ENCODE measurements at regions of chr3 and their contacts with region 1.

Region 1: DNA sequence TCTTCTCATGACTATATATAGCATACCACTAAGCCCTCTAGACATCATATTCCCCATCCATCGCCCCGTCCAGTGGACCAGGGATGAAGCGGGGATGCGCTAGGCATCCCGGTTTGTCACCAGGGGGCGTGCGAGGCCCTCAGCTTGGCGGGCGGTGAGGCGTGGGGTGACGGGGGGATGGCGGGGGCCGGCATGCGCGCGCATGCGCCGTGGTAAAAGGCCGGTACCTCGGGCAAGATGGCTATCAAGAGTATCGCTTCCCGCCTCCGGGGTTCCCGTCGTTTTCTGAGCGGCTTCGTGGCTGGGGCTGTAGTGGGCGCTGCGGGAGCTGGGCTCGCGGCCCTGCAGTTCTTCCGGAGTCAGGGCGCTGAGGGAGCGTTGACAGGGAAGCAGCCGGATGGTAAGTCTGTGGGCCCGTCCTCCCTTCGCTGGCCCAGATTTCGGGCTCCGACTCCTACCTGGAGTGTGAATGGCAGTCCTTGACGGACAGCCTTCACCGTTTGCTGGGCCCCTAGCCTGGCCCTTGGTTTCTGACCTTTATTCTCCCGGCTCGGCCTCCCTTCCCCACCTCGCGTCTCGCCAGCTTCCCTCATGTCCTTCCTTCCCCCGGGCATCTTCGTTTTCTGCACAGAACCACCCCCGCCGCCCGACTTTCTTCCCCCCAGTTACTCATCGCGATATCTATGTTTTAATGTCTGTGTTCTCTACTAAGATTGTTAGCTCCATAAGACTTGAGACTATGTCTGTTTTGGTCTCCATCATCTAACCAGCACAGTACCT is at the start of gene EXOG:
- DNase-seq: peak; percentile 86 to 93 (median 88)
- H3K4me3 ChIP-seq: peak within 1 kb of the TSS; percentile 58 to 87
- H3K4me3 Mint-ChIP-seq: peak within 1 kb of the TSS; percentile 89 to 99 (median 94)
- H3K27ac ChIP-seq: peak within 1 kb of the TSS; percentile 69
- H3K27ac Mint-ChIP-seq: peak within 1 kb of the TSS; percentile 77 to 93 (median 91)
- H3K4me1 ChIP-seq: peaks cover 15% of the 10 kb centered on the region
- H3K4me1 Mint-ChIP-seq: peaks cover 13 to 29% (median 16%) of the 10 kb centered on the region in 4 donors
- H3K27me3 ChIP-seq: no peaks in the 10 kb centered on the region
- H3K27me3 Mint-ChIP-seq: no peaks in the 10 kb centered on the region
- total RNA-seq, gene EXOG: 29.3 to 33.3 TPM

Region 2: DNA sequence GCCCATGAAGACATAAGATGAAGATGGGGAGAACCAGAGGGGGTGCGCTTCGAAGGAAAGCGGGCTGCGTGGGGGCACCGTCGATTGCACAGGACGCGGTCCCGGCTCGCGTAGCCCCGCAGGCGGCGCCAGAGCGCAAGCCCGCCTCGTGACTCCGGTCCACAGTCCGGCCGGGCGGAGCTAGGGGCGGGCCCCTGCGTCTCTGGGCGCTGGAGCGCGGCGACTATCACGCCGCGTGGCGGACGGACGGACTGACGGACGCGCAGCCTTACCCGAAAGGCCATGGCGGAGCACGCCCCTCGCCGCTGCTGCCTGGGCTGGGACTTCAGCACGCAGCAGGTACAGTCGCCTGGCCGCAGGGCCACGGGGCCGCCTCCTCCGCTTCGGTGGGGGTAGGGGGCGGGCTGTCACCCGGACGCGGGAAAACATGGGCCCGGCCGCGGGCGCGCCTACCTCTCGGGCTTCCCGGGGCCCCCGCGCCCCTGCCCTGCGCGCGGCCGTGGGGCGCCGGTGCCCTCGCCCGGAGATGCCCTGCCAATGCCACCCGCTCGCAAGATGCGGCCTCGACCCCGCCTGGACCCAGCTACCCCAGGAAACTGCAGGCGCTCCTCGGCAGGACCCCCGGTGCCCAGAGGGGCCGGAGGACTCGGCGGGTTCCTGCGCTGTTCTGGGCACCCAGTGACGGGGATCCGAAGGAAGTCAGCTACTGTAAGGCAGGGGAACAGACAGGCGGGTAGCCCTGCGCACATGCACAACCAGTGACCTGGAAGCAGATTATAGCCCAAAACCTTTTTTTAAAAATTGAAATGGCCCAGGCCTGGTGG is 149.5 kb before region 1 on chr3 and contains the start of gene XYLB:
- CTCF ChIA-PET with region 1: interaction called, 16 read pairs
- POLR2A ChIA-PET with region 1: no interaction called
- intact Hi-C with region 1: loop called (anchors 5 kb)
- DNase-seq: peak; percentile 54 to 75 (median 72)
- H3K4me3 ChIP-seq: peak within 1 kb of the TSS; percentile 11 to 57
- H3K4me3 Mint-ChIP-seq: peak within 1 kb of the TSS; percentile 80 to 89 (median 82)
- H3K27ac ChIP-seq: peak within 1 kb of the TSS; percentile 28
- H3K27ac Mint-ChIP-seq: peak within 1 kb of the TSS in 2 of 7 donors; percentile 31 to 62
- H3K4me1 ChIP-seq: peaks cover 17% of the 10 kb centered on the region
- H3K4me1 Mint-ChIP-seq: peaks cover 0 to 4% (median 3%) of the 10 kb centered on the region in 4 donors
- H3K27me3 ChIP-seq: no peaks in the 10 kb centered on the region
- H3K27me3 Mint-ChIP-seq: no peaks in the 10 kb centered on the region
- total RNA-seq, gene XYLB: 0.47 to 0.61 TPM

Region 3: GRCh38 chr3:38507120-38507519 is 10.8 kb after region 1 on chr3:
- CTCF ChIA-PET with region 1: interaction called, 16 read pairs
- POLR2A ChIA-PET with region 1: interaction called, 7 read pairs
- intact Hi-C with region 1: no loop called
- DNase-seq: no peak
- H3K4me3 ChIP-seq: no peak overlapping the region
- H3K4me3 Mint-ChIP-seq: no peak overlapping the region
- H3K27ac ChIP-seq: no peak overlapping the region
- H3K27ac Mint-ChIP-seq: peak overlapping the region in 3 of 7 donors; percentile 0 to 31 (median 14)
- H3K4me1 ChIP-seq: no peaks in the 10 kb centered on the region
- H3K4me1 Mint-ChIP-seq: no peaks in the 10 kb centered on the region
- H3K27me3 ChIP-seq: no peaks in the 10 kb centered on the region
- H3K27me3 Mint-ChIP-seq: no peaks in the 10 kb centered on the region

Region 4: GRCh38 chr3:38651154-38651789 is 155.0 kb after region 1 on chr3:
- CTCF ChIA-PET with region 1: interaction called, 155 read pairs
- POLR2A ChIA-PET with region 1: interaction called, 7 read pairs
- intact Hi-C with region 1: loop called (anchors 1 kb)
- DNase-seq: peak in 4 of 5 donors; percentile 64 to 72 (median 70)
- H3K4me3 ChIP-seq: no peak overlapping the region
- H3K4me3 Mint-ChIP-seq: peak overlapping the region in 4 of 8 donors; percentile 7 to 73 (median 53)
- H3K27ac ChIP-seq: no peak overlapping the region
- H3K27ac Mint-ChIP-seq: peak overlapping the region in 2 of 7 donors; percentile 49 to 76
- H3K4me1 ChIP-seq: peaks cover 22% of the 10 kb centered on the region
- H3K4me1 Mint-ChIP-seq: peaks cover 6 to 10% (median 8%) of the 10 kb centered on the region in 4 donors
- H3K27me3 ChIP-seq: peaks cover 10% of the 10 kb centered on the region
- H3K27me3 Mint-ChIP-seq: peaks cover 8 to 26% of the 10 kb centered on the region in 2 donors

Region 5: DNA sequence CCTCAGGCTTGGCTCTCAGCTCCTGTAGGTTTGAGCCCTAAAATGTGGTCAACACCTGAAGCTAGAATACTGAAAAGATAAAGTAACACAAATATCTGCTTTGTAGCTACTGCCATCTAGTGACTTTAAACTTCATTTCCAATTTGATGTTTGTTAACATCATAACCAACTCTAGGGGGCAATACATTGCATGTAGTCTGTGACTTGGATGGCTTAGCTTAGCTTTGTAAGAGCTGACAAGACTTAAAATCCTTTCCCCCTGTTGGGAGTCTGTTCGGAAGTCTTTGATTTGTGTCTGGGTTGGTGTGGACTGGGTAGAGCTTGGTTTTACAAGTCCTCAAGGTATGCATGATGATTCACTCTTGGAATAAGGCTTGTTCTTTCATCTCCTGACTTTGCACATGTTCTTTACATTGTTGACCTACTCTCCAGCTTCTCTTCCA is 503.7 kb after region 1 on chr3:
- CTCF ChIA-PET with region 1: interaction called, 13 read pairs
- POLR2A ChIA-PET with region 1: interaction called, 3 read pairs
- intact Hi-C with region 1: no loop called
- DNase-seq: peak in 4 of 5 donors; percentile 26 to 34 (median 28)
- H3K4me3 ChIP-seq: no peak overlapping the region
- H3K4me3 Mint-ChIP-seq: no peak overlapping the region
- H3K27ac ChIP-seq: no peak overlapping the region
- H3K27ac Mint-ChIP-seq: no peak overlapping the region
- H3K4me1 ChIP-seq: no peaks in the 10 kb centered on the region
- H3K4me1 Mint-ChIP-seq: no peaks in the 10 kb centered on the region
- H3K27me3 ChIP-seq: no peaks in the 10 kb centered on the region
- H3K27me3 Mint-ChIP-seq: peaks cover 5 to 10% of the 10 kb centered on the region in 2 donors

Region 6: DNA sequence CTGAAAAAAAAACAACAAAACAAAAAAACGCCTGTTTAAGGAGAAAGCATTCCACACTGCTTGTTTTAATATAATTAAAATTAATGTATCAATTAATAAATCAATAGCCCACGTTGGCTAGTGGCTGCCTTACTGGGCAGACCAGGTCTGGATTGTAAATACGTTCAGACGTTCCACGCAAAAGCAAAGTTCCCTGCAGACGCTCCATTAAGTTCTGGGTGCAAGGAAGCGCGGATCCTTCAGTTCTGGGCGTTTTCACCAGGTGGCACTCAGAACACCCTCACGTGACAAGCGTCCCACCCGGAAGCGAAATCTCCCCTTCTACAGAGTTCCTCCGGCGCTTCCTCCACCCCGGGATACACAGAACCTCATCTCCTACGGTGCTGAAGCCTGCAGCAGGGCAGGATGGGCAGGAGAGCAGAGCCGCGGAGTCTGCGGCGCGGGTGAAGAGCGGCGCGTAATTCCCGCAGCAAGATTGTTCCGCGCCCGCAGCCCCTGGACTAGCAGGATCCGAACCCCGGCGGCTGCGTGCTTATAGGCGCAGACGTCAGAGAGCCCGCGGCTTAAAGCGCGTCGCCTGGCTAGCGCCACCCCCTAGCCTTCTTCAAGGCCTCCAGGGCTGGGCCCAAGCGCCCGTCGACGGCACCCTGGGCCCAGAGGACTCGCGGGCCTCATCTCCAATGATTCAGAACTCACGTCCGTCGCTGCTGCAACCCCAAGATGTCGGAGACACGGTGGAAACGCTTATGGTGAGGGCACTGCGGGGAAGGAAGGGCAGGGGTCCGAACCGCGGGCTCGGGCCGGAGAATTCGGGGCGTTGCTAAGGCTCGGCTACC is 886.9 kb after region 1 on chr3 and contains the start of gene SLC25A38:
- CTCF ChIA-PET with region 1: no interaction called
- POLR2A ChIA-PET with region 1: no interaction called
- intact Hi-C with region 1: loop called (anchors 10 kb)
- DNase-seq: peak; percentile 82 to 90 (median 85)
- H3K4me3 ChIP-seq: peak within 1 kb of the TSS; percentile 91 to 92
- H3K4me3 Mint-ChIP-seq: peak within 1 kb of the TSS; percentile 96 to 100 (median 98)
- H3K27ac ChIP-seq: peak within 1 kb of the TSS; percentile 93
- H3K27ac Mint-ChIP-seq: peak within 1 kb of the TSS; percentile 97 to 100 (median 100)
- H3K4me1 ChIP-seq: peaks cover 46% of the 10 kb centered on the region
- H3K4me1 Mint-ChIP-seq: peaks cover 31 to 53% (median 44%) of the 10 kb centered on the region in 4 donors
- H3K27me3 ChIP-seq: no peaks in the 10 kb centered on the region
- H3K27me3 Mint-ChIP-seq: no peaks in the 10 kb centered on the region
- total RNA-seq, gene SLC25A38: 46.0 to 53.5 TPM